AG04450 (cell line): ENCODE measurements at regions of chr22 and their contacts with region 1.

Region 1: GRCh38 chr22:44080936-44081861 is 57.1 kb downstream of the PARVB start:
- DNase-seq: peak; percentile 44
- H3K4me3 ChIP-seq: no peak overlapping the region
- H3K27ac ChIP-seq: no peak overlapping the region
- H3K27me3 ChIP-seq: no peaks in the 10 kb centered on the region
- CTCF ChIP-seq: peak; percentile 94

Region 2: GRCh38 chr22:44096736-44097135 is 15.5 kb after region 1 on chr22:
- CTCF ChIA-PET with region 1: interaction called, 10 read pairs
- POLR2A ChIA-PET with region 1: no interaction called
- DNase-seq: no peak
- H3K4me3 ChIP-seq: no peak overlapping the region
- H3K27ac ChIP-seq: no peak overlapping the region
- H3K27me3 ChIP-seq: no peaks in the 10 kb centered on the region
- CTCF ChIP-seq: no peak

Region 3: GRCh38 chr22:44625981-44626687 is 544.9 kb after region 1 on chr22:
- CTCF ChIA-PET with region 1: interaction called, 22 read pairs
- POLR2A ChIA-PET with region 1: no interaction called
- DNase-seq: no peak
- H3K4me3 ChIP-seq: no peak overlapping the region
- H3K27ac ChIP-seq: no peak overlapping the region
- H3K27me3 ChIP-seq: peaks cover 10% of the 10 kb centered on the region
- CTCF ChIP-seq: peak; percentile 97